ENCODE measurements at regions of chr14 and their contacts with region 1.

Region 1: GRCh38 chr14:69673578-69674305 is 62.3 kb downstream of the SUSD6 start:
- DNase-seq: no peak
- H3K4me3 Mint-ChIP-seq: peak overlapping the region; percentile 27
- H3K27ac Mint-ChIP-seq: peak overlapping the region; percentile 91
- H3K4me1 Mint-ChIP-seq: peaks cover 87% of the 10 kb centered on the region
- H3K27me3 Mint-ChIP-seq: no peaks in the 10 kb centered on the region

Region 2: GRCh38 chr14:69685716-69686115 is 12.0 kb after region 1 on chr14:
- CTCF ChIA-PET with region 1: interaction called, 18 read pairs
- DNase-seq: no peak
- H3K4me3 Mint-ChIP-seq: no peak overlapping the region
- H3K27ac Mint-ChIP-seq: peak overlapping the region; percentile 93
- H3K4me1 Mint-ChIP-seq: peaks cover 73% of the 10 kb centered on the region
- H3K27me3 Mint-ChIP-seq: no peaks in the 10 kb centered on the region